Activated naive CD4-positive, alpha-beta T cell treated with anti-CD3 and anti-CD28 coated beads for 36 hours (primary cell): ENCODE measurements at regions of chr20 and their contacts with region 1.

Region 1: DNA sequence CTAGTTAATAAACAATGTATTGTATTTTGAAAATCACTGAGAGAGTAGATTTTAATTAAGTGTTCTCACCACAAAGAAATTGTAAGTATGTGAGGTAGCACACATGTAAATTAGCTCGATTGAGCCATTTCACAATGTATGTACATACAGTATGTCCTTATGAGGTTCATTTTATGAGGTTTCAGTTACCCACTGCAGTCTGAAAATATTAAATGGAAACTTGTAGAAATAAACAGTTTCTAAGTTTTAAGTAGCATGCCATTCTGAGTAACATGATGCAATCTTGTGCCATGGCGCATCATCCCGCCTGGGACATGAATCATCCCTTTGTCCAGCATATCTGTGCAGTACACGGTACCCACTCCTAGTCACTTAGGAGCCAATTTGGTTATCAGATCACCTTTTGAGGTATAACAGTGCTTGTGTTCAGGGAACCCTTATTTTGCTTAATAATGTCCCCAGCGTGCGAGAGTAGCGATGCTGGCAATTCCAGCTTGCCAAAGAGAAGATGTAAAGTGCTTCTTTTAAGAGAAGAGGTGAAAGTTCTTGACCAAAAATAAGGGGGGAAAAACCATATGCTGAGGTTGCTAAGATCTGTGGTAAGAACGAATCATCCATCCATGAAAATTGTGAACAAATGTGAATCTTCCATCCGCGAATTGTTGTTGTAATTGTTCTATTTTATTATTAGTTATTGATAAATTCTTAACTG is 64.7 kb downstream of the KCNS1 start:
- DNase-seq: peak; percentile 84
- H3K4me3 Mint-ChIP-seq: no peak overlapping the region
- H3K27ac Mint-ChIP-seq: peak overlapping the region; percentile 94
- H3K4me1 Mint-ChIP-seq: peaks cover 78% of the 10 kb centered on the region
- H3K27me3 Mint-ChIP-seq: no peaks in the 10 kb centered on the region

Region 2: GRCh38 chr20:45052698-45053429 is 16.7 kb after region 1 on chr20:
- CTCF ChIA-PET with region 1: interaction called, 10 read pairs
- intact Hi-C with region 1: no loop called
- DNase-seq: peak; percentile 20
- H3K4me3 Mint-ChIP-seq: no peak overlapping the region
- H3K27ac Mint-ChIP-seq: peak overlapping the region; percentile 80
- H3K4me1 Mint-ChIP-seq: peaks cover 80% of the 10 kb centered on the region
- H3K27me3 Mint-ChIP-seq: no peaks in the 10 kb centered on the region

Region 3: DNA sequence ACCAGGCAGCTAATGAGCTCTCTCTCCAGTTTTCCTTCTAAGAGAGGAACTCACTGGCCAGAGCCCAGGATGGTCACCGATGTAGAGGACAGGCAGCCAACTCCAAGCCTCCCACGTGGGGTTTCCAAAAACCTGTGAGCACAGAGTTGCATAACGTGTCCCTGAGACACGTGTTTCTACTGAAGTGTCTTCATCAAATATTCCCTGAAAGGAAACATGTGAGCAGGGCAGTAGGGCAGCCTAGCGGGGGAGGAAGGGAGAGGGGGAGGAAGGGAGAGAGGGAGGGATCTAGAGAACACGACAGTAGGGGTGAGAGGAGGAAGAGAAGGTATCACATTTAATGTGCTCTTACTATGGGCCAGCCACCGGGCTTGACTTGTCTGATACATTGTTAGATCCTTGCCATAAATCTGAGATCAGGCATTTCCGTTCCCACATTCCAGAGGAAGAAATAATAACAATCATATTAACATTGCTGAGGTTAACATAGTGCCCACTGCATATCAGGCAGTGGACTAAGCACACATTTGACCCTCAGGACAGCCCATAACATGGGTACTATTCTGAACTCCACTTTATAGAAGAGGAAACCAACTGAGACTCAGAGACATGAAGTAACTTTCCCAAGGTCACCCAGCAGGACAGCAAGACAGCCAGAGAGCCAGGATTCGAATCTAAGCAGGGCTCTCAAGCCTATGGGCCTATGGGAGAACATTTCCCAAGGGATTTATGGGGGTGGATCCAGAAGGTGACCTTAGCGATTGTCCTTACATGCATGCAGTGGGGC is 322.3 kb after region 1 on chr20:
- CTCF ChIA-PET with region 1: no interaction called
- intact Hi-C with region 1: no loop called
- DNase-seq: no peak
- H3K4me3 Mint-ChIP-seq: no peak overlapping the region
- H3K27ac Mint-ChIP-seq: no peak overlapping the region
- H3K4me1 Mint-ChIP-seq: peaks cover 54% of the 10 kb centered on the region
- H3K27me3 Mint-ChIP-seq: no peaks in the 10 kb centered on the region